Panc1 (cell line): ENCODE measurements at regions of chr11 and their contacts with region 1.

Region 1: DNA sequence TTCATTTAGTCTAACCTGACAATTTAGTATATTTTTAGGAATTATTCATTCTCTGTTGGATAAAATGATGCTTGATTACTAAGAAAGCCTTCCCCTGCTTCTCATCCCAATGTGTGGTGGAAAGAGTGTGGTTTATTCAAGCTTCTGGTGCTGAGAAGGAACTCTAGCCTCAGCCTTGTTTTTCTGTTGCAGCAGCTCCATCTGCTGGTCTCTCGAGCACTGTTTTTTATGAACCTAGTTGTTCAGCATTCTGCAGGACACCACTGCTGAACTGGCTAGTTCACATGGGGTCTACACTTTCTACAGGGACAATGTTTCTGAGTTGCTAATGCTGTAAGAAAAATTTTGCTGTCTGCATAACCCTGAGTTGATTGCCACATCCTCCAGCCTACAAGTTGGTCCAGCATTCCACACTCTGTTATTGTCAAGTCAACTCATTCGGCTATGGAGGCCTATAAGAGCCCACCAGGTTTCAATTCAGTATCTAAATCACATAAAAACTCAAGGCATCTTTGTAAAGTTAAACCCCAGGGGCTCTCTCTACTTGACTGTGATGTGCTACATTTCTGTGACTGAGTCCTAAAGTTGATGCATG is 14.3 kb downstream of the OR2AG2 start:
- DNase-seq: no peak
- ATAC-seq: peak; percentile 96
- H3K4me3 ChIP-seq: no peak overlapping the region
- H3K27ac ChIP-seq: no peak overlapping the region
- H3K4me1 ChIP-seq: no peaks in the 10 kb centered on the region
- H3K27me3 ChIP-seq: peaks cover 2% of the 10 kb centered on the region; the same call in 1 of the 2 replicates
- CTCF ChIP-seq: peak; percentile 93

Region 2: GRCh38 chr11:6568191-6568918 is 189.1 kb before region 1 on chr11:
- CTCF ChIA-PET with region 1: no interaction called
- POLR2A ChIA-PET with region 1: no interaction called
- in situ Hi-C with region 1: no loop called
- intact Hi-C with region 1: no loop called
- DNase-seq: no peak
- ATAC-seq: 0 out of 2 replicates have a peak, but pooled peaks have one; percentile 25
- H3K4me3 ChIP-seq: no peak overlapping the region
- H3K27ac ChIP-seq: no peak overlapping the region
- H3K4me1 ChIP-seq: no peaks in the 10 kb centered on the region
- H3K27me3 ChIP-seq: no peaks in the 10 kb centered on the region
- CTCF ChIP-seq: no peak

Region 3: GRCh38 chr11:6619004-6619745 is 138.3 kb before region 1 on chr11 and contains the start of gene TPP1:
- CTCF ChIA-PET with region 1: no interaction called
- POLR2A ChIA-PET with region 1: no interaction called
- in situ Hi-C with region 1: no loop called
- intact Hi-C with region 1: no loop called
- DNase-seq: peak; percentile 95
- ATAC-seq: peak; percentile 99
- H3K4me3 ChIP-seq: peak within 1 kb of the TSS; percentile 82 to 100
- H3K27ac ChIP-seq: peak within 1 kb of the TSS; percentile 98
- H3K4me1 ChIP-seq: peaks cover 13% of the 10 kb centered on the region
- H3K27me3 ChIP-seq: no peaks in the 10 kb centered on the region
- CTCF ChIP-seq: no peak
- total RNA-seq, gene TPP1: 200 TPM

Region 4: GRCh38 chr11:6705905-6706535 is 51.5 kb before region 1 on chr11:
- CTCF ChIA-PET with region 1: interaction called, 3 read pairs
- POLR2A ChIA-PET with region 1: no interaction called
- in situ Hi-C with region 1: no loop called
- intact Hi-C with region 1: loop called (anchors 1 kb)
- DNase-seq: no peak
- ATAC-seq: peak; percentile 69
- H3K4me3 ChIP-seq: no peak overlapping the region
- H3K27ac ChIP-seq: no peak overlapping the region
- H3K4me1 ChIP-seq: no peaks in the 10 kb centered on the region
- H3K27me3 ChIP-seq: 0 out of 2 replicates have a peak, but pooled peaks cover 2% of the 10 kb centered on the region
- CTCF ChIP-seq: peak; percentile 98

Region 5: DNA sequence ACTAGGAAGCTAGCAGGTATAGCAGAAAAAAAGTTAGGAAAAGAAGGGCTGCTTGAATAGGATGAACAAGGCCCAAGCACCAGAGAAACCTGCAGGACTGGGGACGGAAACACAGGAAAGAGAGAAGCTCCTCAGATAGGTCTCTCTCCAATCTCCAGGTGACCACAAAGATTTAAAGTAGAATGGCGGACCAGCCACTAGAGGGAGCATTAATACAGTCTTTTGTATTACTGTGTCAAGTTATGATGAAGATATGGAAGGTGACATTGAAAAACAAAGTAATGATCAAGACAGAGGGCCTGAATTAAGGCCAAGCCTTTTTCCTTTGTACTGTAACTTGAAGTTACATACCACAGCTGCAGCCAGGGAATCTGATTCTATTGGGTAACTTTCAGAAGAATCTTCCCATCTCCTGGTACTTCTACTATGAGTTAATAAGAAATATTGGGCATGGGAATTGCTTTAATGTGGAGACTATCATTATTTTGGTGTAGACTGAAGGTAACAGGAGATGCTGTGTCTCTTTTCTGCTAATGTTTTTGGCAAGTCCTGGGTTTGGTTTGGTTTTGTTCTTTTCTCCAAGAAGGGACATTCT is 19.5 kb before region 1 on chr11:
- CTCF ChIA-PET with region 1: interaction called, 16 read pairs
- POLR2A ChIA-PET with region 1: no interaction called
- in situ Hi-C with region 1: no loop called
- intact Hi-C with region 1: loop called (anchors 2 kb)
- DNase-seq: no peak
- ATAC-seq: peak; percentile 93
- H3K4me3 ChIP-seq: no peak overlapping the region
- H3K27ac ChIP-seq: no peak overlapping the region
- H3K4me1 ChIP-seq: 0 out of 2 replicates have a peak, but pooled peaks cover 3% of the 10 kb centered on the region
- H3K27me3 ChIP-seq: peaks cover 9% of the 10 kb centered on the region; the same call in 1 of the 2 replicates
- CTCF ChIP-seq: peak; percentile 93